Activated CD4-positive, alpha-beta memory T cell treated with anti-CD3 and anti-CD28 coated beads for 36 hours (primary cell): ENCODE measurements at regions of chr3 and their contacts with region 1.

Region 1: GRCh38 chr3:57998366-57999283 is 9.6 kb upstream of the FLNB start:
- DNase-seq: no peak
- H3K4me3 Mint-ChIP-seq: peak overlapping the region; percentile 39
- H3K27ac Mint-ChIP-seq: no peak overlapping the region
- H3K4me1 Mint-ChIP-seq: peaks cover 10% of the 10 kb centered on the region
- H3K27me3 Mint-ChIP-seq: no peaks in the 10 kb centered on the region

Region 2: GRCh38 chr3:57852896-57853295 is 145.7 kb before region 1 on chr3:
- CTCF ChIA-PET with region 1: no interaction called
- POLR2A ChIA-PET with region 1: no interaction called
- intact Hi-C with region 1: no loop called
- DNase-seq: no peak
- H3K4me3 Mint-ChIP-seq: no peak overlapping the region
- H3K27ac Mint-ChIP-seq: no peak overlapping the region
- H3K4me1 Mint-ChIP-seq: no peaks in the 10 kb centered on the region
- H3K27me3 Mint-ChIP-seq: no peaks in the 10 kb centered on the region

Region 3: GRCh38 chr3:57983734-57984518 is 14.7 kb before region 1 on chr3:
- CTCF ChIA-PET with region 1: no interaction called
- POLR2A ChIA-PET with region 1: no interaction called
- intact Hi-C with region 1: loop called (anchors 1 kb)
- DNase-seq: peak; percentile 81
- H3K4me3 Mint-ChIP-seq: no peak overlapping the region
- H3K27ac Mint-ChIP-seq: peak overlapping the region; percentile 81
- H3K4me1 Mint-ChIP-seq: peaks cover 20% of the 10 kb centered on the region
- H3K27me3 Mint-ChIP-seq: no peaks in the 10 kb centered on the region

Region 4: DNA sequence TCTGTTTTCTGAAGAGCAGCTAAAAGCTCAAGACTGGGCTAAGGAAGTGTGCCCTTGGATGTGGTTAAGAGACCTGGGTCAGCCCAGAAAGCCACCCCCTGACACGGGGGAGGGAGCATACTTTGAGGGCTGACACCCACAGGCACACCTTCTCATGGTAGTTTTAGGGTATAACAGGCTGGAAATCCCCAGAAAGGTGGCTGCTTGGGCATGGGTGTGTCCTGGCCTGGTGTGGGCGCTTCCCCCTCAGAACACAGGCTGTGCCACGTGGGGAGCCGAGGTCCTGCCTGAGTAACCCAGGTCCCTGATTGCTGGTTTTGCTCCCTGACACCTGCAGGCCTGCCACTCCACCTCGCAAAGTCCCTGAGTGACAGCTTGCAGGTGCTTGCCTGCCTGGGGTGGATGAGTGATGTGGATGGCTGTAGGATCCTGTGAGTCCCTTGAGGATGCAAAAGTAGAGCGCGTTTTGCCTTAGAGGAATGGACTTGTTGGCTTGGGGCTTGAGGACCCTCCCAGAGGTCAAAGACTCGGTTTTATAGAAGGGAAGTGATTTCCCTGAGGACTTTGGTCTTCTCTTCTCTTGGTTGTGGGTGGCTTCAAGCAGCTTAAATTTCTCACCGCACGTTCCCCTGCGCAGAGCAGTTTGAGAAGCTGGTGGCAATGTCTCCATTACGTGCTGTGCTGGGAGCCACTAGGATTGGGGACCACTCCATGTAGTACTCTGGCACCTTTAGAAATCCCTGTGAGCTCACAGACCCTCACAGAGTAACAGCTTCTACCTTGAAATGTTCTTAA is 117.7 kb after region 1 on chr3:
- CTCF ChIA-PET with region 1: no interaction called
- POLR2A ChIA-PET with region 1: no interaction called
- intact Hi-C with region 1: no loop called
- DNase-seq: peak; percentile 50
- H3K4me3 Mint-ChIP-seq: no peak overlapping the region
- H3K27ac Mint-ChIP-seq: peak overlapping the region; percentile 54
- H3K4me1 Mint-ChIP-seq: peaks cover 29% of the 10 kb centered on the region
- H3K27me3 Mint-ChIP-seq: no peaks in the 10 kb centered on the region

Region 5: DNA sequence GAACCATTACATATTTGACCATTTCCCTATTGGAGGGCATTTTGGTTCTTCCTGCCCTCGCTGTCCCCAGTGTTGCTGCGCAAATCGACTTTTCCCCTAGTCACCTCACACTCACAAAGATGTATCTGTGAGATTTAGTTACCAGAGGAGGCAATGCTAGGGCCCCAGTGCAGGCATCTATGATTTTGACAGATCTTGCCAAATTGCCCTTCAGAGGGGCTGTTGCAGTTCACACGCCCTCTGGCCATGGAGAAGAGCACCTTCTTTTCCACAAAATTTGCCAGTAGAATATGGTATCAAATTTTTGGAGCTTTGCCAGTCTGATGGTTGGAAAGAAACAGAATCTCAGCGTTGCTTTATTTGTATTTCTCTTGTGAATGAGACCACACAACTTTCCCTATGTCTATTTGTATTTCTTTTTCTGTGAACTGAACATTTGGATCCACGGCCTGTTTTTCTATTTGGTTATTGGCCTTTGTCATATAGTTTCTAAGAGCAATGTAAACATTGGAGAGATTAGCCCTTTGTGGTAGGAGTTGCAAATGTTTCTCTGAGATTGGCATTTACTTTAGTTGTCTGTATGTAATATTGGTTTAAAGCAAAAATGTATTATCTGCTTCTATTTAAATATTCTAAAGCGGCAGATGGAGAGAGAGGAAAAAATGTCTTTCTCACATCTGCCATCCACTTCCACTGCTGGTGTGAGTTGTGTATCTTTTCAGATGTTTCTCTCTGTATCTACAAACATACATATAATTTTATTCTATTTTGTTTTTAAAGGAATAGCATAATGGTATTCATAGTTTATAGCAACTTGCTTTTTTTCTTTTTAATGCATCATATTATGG is 146.1 kb after region 1 on chr3:
- CTCF ChIA-PET with region 1: no interaction called
- POLR2A ChIA-PET with region 1: no interaction called
- intact Hi-C with region 1: no loop called
- DNase-seq: no peak
- H3K4me3 Mint-ChIP-seq: no peak overlapping the region
- H3K27ac Mint-ChIP-seq: no peak overlapping the region
- H3K4me1 Mint-ChIP-seq: no peaks in the 10 kb centered on the region
- H3K27me3 Mint-ChIP-seq: no peaks in the 10 kb centered on the region